Sciatic nerve (tissue), 2 donors: ENCODE measurements at regions of chr2 and their contacts with region 1.

Region 1: DNA sequence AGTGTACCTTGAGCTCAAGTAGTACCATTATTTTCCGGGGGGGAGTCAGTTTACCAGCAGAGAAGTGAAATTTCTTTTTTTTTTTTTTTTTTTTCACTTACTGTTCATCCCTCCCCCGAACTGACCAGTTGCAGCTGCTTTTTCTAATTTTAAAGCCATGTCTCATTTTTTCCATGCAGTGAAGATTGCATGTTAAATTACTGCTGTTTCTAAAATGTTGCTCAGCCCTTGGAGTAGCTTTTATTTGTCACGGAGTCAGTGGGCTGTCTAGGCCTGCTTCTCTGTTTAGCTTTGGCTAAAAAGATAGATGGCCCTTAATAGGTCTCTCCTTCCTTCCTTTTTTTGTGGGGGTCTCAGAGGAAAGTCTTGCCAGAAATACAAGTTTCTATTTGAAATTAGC is 70.2 kb downstream of the NGEF start:
- DNase-seq: no peak
- ATAC-seq: no peak

Region 2: GRCh38 chr2:232982926-232983668 is 40.3 kb after region 1 on chr2:
- intact Hi-C with region 1: loop called (anchors 1 kb)
- DNase-seq: no peak
- ATAC-seq: no peak